Gastrocnemius medialis (tissue), 4 donors: ENCODE measurements at regions of chr3 and their contacts with region 1.

Region 1: GRCh38 chr3:135229018-135229495 is 434.0 kb downstream of the EPHB1 start:
- DNase-seq: peak; percentile 83 to 93
- ATAC-seq: peak; percentile 93 to 95
- H3K4me3 ChIP-seq: no peak overlapping the region
- H3K27ac ChIP-seq: peak overlapping the region; percentile 77 to 83 (median 78)
- H3K4me1 ChIP-seq: peaks cover 16 to 21% of the 10 kb centered on the region in 2 donors
- H3K27me3 ChIP-seq: no peaks in the 10 kb centered on the region
- CTCF ChIP-seq: peak; percentile 33 to 65 (median 54)
- POLR2A ChIP-seq: peak in 1 of 2 donors; percentile 38

Region 2: GRCh38 chr3:135175728-135176277 is 53.3 kb before region 1 on chr3:
- in situ Hi-C with region 1: no loop called
- intact Hi-C with region 1: no loop called
- DNase-seq: no peak
- ATAC-seq: no peak
- H3K4me3 ChIP-seq: no peak overlapping the region
- H3K27ac ChIP-seq: no peak overlapping the region
- H3K4me1 ChIP-seq: no peaks in the 10 kb centered on the region
- H3K27me3 ChIP-seq: no peaks in the 10 kb centered on the region
- CTCF ChIP-seq: no peak
- POLR2A ChIP-seq: no peak

Region 3: DNA sequence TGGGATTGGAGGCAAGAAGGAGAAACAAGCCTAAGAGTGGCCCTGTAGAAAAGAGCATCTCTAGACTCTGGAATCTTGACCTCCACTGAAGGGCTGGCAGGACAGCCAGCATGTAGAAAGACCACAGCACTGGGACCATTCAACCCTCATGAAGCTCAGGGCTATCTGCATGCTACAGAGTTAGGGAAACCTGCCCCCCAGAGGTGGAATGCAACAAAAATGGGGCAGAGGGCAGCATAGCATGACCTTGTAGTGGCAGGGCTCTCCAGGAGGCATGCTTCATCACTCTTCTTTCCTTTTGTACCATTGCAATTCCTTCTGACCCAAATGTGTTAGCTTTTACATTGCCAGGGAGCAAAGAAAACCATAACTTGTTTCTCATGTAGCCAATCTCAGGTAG is 11.4 kb after region 1 on chr3:
- in situ Hi-C with region 1: no loop called
- intact Hi-C with region 1: no loop called
- DNase-seq: no peak
- ATAC-seq: no peak
- H3K4me3 ChIP-seq: no peak overlapping the region
- H3K27ac ChIP-seq: no peak overlapping the region
- H3K4me1 ChIP-seq: peaks cover 0 to 4% of the 10 kb centered on the region in 2 donors
- H3K27me3 ChIP-seq: no peaks in the 10 kb centered on the region
- CTCF ChIP-seq: peak in 1 of 5 experiments; percentile 9
- POLR2A ChIP-seq: no peak

Region 4: GRCh38 chr3:135314237-135314636 is 85.2 kb after region 1 on chr3:
- in situ Hi-C with region 1: no loop called
- intact Hi-C with region 1: no loop called
- DNase-seq: no peak
- ATAC-seq: no peak
- H3K4me3 ChIP-seq: no peak overlapping the region
- H3K27ac ChIP-seq: no peak overlapping the region
- H3K4me1 ChIP-seq: no peaks in the 10 kb centered on the region
- H3K27me3 ChIP-seq: no peaks in the 10 kb centered on the region
- CTCF ChIP-seq: no peak
- POLR2A ChIP-seq: no peak

Region 5: DNA sequence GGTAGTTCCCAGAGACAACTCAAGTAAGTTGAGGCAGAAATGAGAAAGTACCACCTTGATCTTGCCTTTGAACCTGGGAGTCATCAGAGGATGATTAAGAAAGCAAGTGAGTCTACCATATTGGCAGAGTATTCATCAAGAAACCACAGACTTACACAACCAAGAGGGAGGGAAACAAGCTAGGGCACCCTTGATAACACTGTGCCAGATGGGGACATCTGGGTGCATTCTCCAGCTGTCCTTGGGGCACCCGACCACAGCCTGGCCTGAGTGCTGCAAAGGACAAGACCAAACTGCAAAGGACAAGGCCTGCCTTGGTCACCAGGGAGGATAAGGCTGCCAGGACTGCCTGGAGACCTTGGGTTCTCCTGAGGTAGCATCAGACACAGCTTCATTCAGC is 119.6 kb after region 1 on chr3:
- in situ Hi-C with region 1: no loop called
- intact Hi-C with region 1: loop called (anchors 5 kb)
- DNase-seq: peak in 1 of 2 donors; percentile 46
- ATAC-seq: peak; percentile 18 to 40
- H3K4me3 ChIP-seq: no peak overlapping the region
- H3K27ac ChIP-seq: peak overlapping the region; percentile 61 to 71 (median 70)
- H3K4me1 ChIP-seq: peaks cover 16 to 17% of the 10 kb centered on the region in 2 donors
- H3K27me3 ChIP-seq: no peaks in the 10 kb centered on the region
- CTCF ChIP-seq: no peak
- POLR2A ChIP-seq: no peak

Region 6: DNA sequence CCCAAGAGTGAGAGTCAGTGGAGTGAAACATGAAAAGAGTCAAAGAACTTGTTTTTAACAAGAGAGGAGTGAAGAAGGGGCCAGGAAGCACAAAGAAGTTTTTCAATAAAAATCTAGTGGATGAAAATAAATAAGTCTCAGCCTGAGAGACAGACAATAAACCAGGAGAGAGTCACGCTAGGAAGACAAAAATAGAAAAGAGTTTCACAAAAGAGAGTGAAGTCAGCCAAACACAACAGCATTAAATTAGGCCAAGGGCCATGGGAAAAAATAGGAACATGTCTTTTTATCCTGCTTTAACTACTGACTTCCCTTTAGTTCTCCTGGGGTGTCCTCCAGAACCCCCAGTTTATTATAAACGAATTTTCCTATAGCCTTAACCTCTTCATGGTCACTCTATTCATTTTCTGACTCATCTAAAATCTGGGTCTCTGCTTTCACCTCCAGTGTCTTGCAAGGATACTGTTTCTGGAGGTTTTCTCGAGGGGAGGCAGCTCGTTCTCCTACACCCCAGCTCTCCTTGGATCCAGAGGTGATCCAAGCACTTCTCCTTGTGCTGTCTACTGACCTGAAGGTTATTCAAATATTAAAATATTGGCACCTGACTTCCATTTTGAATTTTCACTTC is 165.0 kb after region 1 on chr3:
- in situ Hi-C with region 1: no loop called
- intact Hi-C with region 1: loop called (anchors 2 kb)
- DNase-seq: no peak
- ATAC-seq: peak; percentile 90 to 91
- H3K4me3 ChIP-seq: no peak overlapping the region
- H3K27ac ChIP-seq: peak overlapping the region; percentile 44 to 75 (median 66)
- H3K4me1 ChIP-seq: peaks cover 6 to 17% of the 10 kb centered on the region in 2 donors
- H3K27me3 ChIP-seq: no peaks in the 10 kb centered on the region
- CTCF ChIP-seq: no peak
- POLR2A ChIP-seq: no peak

Region 7: GRCh38 chr3:135503760-135504686 is 275.0 kb after region 1 on chr3:
- in situ Hi-C with region 1: no loop called
- intact Hi-C with region 1: loop called (anchors 2 kb)
- DNase-seq: peak; percentile 18 to 58
- ATAC-seq: peak; percentile 82 to 89
- H3K4me3 ChIP-seq: no peak overlapping the region
- H3K27ac ChIP-seq: no peak overlapping the region
- H3K4me1 ChIP-seq: peaks cover 0 to 5% of the 10 kb centered on the region in 2 donors
- H3K27me3 ChIP-seq: peaks cover 0 to 2% (median 0%) of the 10 kb centered on the region in 3 donors
- CTCF ChIP-seq: peak; percentile 55 to 76 (median 72)
- POLR2A ChIP-seq: no peak

Region 8: DNA sequence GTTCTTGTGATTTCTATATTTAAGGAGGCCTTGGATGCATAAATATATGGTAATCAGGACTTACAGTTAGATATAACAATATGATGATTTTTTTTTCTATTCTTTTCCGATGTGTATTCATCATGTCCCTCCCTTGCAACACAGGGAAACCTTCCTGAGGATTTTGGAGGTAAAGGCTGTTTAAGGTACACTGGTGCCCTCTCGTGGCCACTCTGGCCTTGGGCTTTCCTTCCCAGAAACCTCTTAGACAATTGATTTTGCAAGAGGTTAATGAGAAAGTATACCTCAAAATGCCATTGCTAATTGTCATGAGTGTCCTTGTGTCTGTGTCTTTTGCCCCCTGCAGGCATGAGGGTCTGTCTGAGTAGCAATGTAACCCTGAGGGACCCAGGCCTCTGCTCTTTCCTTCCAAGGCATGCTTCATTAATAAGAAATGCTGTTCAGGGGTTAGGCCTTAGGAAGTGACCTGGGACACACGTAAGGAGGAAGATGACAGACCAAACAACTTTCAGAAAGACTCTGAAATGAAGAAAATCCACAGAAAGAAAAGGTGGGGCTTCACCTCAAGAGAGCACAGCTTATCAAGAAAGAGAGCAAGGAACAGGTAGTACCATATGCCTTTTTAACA is 666.2 kb after region 1 on chr3:
- in situ Hi-C with region 1: no loop called
- intact Hi-C with region 1: loop called (anchors 10 kb)
- DNase-seq: peak; percentile 12 to 52
- ATAC-seq: peak; percentile 62 to 81
- H3K4me3 ChIP-seq: no peak overlapping the region
- H3K27ac ChIP-seq: no peak overlapping the region
- H3K4me1 ChIP-seq: no peaks in the 10 kb centered on the region
- H3K27me3 ChIP-seq: no peaks in the 10 kb centered on the region
- CTCF ChIP-seq: peak; percentile 56 to 85 (median 70)
- POLR2A ChIP-seq: no peak

Region 9: DNA sequence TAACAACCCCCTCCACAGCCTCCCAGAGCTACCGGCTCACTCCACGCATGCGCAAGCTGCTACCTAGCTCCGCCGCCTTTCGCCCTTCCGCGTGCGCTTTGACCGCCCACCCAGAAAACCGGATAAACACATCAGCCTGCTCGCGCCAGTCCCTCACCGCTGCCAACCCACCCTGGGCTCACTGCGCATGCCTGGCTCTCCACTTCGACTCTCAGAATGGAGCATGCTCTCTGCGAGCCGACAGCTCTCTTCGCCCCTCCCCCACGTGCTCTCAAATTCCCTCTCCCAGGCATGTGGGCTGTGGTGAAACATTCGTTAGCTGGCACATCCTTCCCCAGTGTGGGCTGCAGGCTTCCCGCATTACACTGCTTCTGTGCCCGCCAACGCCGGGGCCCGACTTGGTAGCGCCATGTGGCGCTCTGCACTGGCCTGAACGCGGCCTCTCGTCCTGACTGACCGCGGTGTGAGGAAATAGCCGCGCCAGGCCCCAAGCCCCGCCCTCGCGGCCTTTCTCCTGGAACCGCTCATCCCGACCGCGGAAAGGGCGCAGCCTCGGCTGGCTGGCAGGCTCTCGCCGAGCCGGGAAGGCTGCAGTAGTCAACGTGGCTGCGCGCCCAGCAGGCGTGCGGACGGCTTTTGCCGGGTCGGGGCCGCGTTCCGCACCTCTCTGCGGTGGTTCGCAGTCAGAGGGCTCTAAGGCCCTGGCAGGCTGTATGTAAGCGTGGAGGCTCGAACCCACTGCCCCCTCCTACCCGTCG is 967.5 kb after region 1 on chr3:
- in situ Hi-C with region 1: no loop called
- intact Hi-C with region 1: loop called (anchors 5 kb)
- DNase-seq: peak; percentile 97 to 99
- ATAC-seq: peak; percentile 78 to 84
- H3K4me3 ChIP-seq: peak overlapping the region; percentile 84 to 95 (median 92)
- H3K27ac ChIP-seq: peak overlapping the region; percentile 91 to 100 (median 100)
- H3K4me1 ChIP-seq: peaks cover 32 to 38% of the 10 kb centered on the region in 2 donors
- H3K27me3 ChIP-seq: no peaks in the 10 kb centered on the region
- CTCF ChIP-seq: no peak
- POLR2A ChIP-seq: peak; percentile 69 to 80